ENCODE measurements at regions of chr15 and their contacts with region 1.

Region 1: GRCh38 chr15:40623361-40623760 is 29.3 kb downstream of the KNL1 start:
- DNase-seq: no peak
- H3K4me3 ChIP-seq: no peak overlapping the region
- H3K27ac ChIP-seq: no peak overlapping the region
- H3K4me1 ChIP-seq: no peaks in the 10 kb centered on the region
- H3K27me3 ChIP-seq: no peaks in the 10 kb centered on the region
- CTCF ChIP-seq: no peak

Region 2: GRCh38 chr15:40650479-40650878 is 27.1 kb after region 1 on chr15:
- CTCF ChIA-PET with region 1: no interaction called
- POLR2A ChIA-PET with region 1: interaction called, 11 read pairs
- intact Hi-C with region 1: no loop called
- DNase-seq: no peak
- H3K4me3 ChIP-seq: no peak overlapping the region
- H3K27ac ChIP-seq: no peak overlapping the region
- H3K4me1 ChIP-seq: no peaks in the 10 kb centered on the region
- H3K27me3 ChIP-seq: no peaks in the 10 kb centered on the region
- CTCF ChIP-seq: no peak

Region 3: DNA sequence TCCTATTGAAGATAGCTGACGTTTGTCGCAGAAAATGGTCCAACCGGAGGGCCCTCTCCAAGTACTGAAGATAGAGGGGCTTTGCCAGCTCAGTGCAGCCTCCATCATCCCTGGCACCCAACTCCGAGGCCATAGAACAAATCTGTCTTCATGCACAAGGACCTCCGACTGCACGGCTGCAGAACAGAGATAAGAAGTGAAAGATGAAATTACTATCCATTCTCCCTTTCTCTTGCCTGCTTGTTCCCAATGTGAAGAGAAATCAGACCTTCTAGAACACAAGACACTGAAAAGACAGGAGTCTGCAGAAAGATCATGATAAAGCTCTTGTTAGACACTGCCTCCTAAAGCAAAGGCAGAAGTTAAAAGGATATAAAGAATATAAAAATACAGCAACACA is 472.8 kb after region 1 on chr15:
- CTCF ChIA-PET with region 1: no interaction called
- POLR2A ChIA-PET with region 1: no interaction called
- intact Hi-C with region 1: no loop called
- DNase-seq: no peak
- H3K4me3 ChIP-seq: no peak overlapping the region
- H3K27ac ChIP-seq: no peak overlapping the region
- H3K4me1 ChIP-seq: no peaks in the 10 kb centered on the region
- H3K27me3 ChIP-seq: no peaks in the 10 kb centered on the region
- CTCF ChIP-seq: no peak

Measured in PC-9 (cell line).